ENCODE measurements at regions of chr15 and their contacts with region 1.

Region 1: GRCh38 chr15:89171136-89172072 is 50.0 kb downstream of the RLBP1 start:
- DNase-seq: peak; percentile 70
- H3K4me3 Mint-ChIP-seq: no peak overlapping the region
- H3K27ac Mint-ChIP-seq: no peak overlapping the region
- H3K4me1 Mint-ChIP-seq: peaks cover 19% of the 10 kb centered on the region
- H3K27me3 Mint-ChIP-seq: no peaks in the 10 kb centered on the region
- CTCF ChIP-seq: peak; percentile 65

Region 2: DNA sequence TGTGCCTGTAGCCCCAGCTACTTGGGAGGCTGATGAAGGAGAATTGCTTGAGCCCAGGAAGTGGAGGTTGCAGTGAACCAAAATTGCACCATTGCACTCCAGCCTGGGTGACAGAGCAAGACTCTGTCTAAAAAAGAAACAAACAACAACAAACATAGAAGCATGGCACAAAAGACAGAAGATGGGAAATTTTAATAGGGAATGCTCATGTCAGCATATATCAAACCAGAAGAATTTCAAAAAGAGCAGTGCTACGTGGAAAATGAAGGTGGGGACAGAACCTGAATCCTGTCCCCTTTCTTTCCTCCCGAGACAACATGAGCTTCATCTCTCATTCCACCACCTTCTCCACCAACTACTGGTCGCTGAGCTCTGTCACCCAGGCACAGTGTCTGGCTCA is 212.0 kb before region 1 on chr15:
- CTCF ChIA-PET with region 1: no interaction called
- POLR2A ChIA-PET with region 1: no interaction called
- intact Hi-C with region 1: no loop called
- DNase-seq: no peak
- H3K4me3 Mint-ChIP-seq: no peak overlapping the region
- H3K27ac Mint-ChIP-seq: no peak overlapping the region
- H3K4me1 Mint-ChIP-seq: no peaks in the 10 kb centered on the region
- H3K27me3 Mint-ChIP-seq: no peaks in the 10 kb centered on the region
- CTCF ChIP-seq: no peak

Region 3: GRCh38 chr15:89075846-89076245 is 95.6 kb before region 1 on chr15:
- CTCF ChIA-PET with region 1: interaction called, 10 read pairs
- POLR2A ChIA-PET with region 1: no interaction called
- intact Hi-C with region 1: no loop called
- DNase-seq: no peak
- H3K4me3 Mint-ChIP-seq: no peak overlapping the region
- H3K27ac Mint-ChIP-seq: no peak overlapping the region
- H3K4me1 Mint-ChIP-seq: peaks cover 8% of the 10 kb centered on the region
- H3K27me3 Mint-ChIP-seq: no peaks in the 10 kb centered on the region
- CTCF ChIP-seq: no peak

Region 4: DNA sequence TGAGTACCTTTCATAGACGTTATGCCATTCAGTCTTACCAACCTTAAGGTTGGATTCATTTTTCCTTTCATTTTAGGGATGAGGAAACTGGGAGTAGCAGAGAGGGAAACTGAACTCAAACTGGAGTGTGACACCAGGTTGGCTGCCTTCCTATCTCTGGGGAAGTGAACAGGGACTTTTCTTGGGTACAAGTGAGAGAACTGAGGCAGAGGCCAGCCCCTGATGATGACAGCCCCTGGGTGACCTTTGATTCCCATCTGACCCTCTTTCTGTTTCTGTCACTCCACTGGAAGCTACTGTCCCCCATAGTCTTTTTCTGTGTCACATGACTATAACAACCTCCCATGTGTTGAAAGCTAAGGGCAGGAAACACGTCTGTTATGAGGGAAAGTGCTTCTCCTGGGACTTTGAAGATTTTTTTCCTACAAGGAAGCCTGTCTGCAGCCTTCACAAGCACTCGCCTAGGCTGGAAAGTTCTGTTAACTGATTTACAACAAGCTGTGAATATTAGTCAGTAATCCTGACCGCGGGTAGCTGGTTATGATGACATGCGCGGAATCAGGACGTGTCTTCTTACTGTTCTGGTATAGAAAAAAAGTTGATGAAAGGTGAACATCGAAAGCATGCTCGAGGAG is 51.8 kb before region 1 on chr15:
- CTCF ChIA-PET with region 1: interaction called, 4 read pairs
- POLR2A ChIA-PET with region 1: interaction called, 12 read pairs
- intact Hi-C with region 1: no loop called
- DNase-seq: peak; percentile 66
- H3K4me3 Mint-ChIP-seq: no peak overlapping the region
- H3K27ac Mint-ChIP-seq: peak overlapping the region; percentile 91
- H3K4me1 Mint-ChIP-seq: peaks cover 47% of the 10 kb centered on the region
- H3K27me3 Mint-ChIP-seq: no peaks in the 10 kb centered on the region
- CTCF ChIP-seq: no peak

Region 5: DNA sequence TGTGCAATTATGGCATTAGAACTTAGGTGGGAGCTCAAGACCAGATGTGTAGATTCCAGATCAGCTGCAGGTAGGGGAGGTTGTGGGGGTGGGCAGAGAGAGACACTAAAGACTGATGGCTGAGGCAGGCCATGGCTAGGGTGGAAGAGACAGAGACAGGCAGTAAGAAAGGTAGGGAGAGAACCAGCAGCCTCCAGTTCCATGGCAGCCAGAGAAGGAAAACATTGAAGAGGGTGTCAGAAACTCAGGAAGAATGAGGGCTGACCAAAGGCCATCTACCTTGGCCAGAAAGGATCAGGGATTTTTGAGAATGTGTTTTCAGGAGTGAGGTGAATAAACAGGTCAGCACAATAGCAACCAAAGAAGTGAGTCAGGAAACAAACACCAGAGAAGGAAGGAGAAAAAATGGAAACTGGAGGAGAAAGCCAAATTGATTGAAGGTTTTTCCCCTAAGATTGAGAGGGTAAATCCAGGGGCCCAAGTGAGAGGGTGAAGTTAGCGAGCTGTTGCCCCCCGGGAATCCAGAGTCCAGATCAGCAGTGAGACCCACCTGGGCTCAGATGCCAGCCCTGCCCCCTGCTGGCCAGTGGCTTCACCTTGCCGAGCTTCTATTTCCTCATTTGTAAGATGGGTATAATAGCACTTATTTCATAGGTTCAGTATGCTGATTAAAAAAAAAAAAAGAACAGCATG is 42.1 kb before region 1 on chr15:
- CTCF ChIA-PET with region 1: interaction called, 38 read pairs
- POLR2A ChIA-PET with region 1: interaction called, 12 read pairs
- intact Hi-C with region 1: loop called (anchors 2 kb)
- DNase-seq: peak; percentile 60
- H3K4me3 Mint-ChIP-seq: no peak overlapping the region
- H3K27ac Mint-ChIP-seq: no peak overlapping the region
- H3K4me1 Mint-ChIP-seq: peaks cover 5% of the 10 kb centered on the region
- H3K27me3 Mint-ChIP-seq: no peaks in the 10 kb centered on the region
- CTCF ChIP-seq: peak; percentile 65

Region 6: DNA sequence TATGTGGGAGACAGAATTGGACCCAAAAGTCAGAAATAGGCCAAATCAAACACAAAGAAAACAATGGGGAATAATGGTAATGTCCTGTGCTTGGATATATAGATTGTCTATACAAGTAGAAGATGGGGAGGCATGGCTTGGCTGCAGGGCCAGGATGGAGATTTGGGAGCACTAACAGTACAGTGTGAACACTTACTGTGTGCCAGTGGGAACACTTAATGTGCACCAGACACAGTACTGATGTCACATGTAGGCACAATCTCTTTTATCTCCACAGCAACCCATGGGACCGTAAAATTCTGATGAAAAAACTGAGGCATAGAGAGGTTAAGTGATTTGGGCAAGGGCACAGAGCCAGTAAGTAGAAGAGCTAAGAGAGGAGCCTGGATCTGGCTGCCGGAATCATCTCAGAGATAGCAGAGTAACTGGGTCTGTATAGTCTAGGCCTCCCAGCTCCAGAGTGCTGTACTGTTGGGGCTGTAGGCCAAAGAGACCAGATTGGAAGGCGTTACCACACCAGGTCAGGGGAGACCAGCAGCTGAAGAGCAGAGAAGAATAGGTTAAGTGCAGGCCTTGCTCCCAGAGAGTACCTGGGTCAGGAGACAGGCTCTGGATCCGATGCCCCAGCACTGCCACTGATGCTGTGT is 13.4 kb before region 1 on chr15:
- CTCF ChIA-PET with region 1: interaction called, 18 read pairs
- POLR2A ChIA-PET with region 1: no interaction called
- intact Hi-C with region 1: no loop called
- DNase-seq: no peak
- H3K4me3 Mint-ChIP-seq: no peak overlapping the region
- H3K27ac Mint-ChIP-seq: no peak overlapping the region
- H3K4me1 Mint-ChIP-seq: no peaks in the 10 kb centered on the region
- H3K27me3 Mint-ChIP-seq: no peaks in the 10 kb centered on the region
- CTCF ChIP-seq: no peak

Region 7: DNA sequence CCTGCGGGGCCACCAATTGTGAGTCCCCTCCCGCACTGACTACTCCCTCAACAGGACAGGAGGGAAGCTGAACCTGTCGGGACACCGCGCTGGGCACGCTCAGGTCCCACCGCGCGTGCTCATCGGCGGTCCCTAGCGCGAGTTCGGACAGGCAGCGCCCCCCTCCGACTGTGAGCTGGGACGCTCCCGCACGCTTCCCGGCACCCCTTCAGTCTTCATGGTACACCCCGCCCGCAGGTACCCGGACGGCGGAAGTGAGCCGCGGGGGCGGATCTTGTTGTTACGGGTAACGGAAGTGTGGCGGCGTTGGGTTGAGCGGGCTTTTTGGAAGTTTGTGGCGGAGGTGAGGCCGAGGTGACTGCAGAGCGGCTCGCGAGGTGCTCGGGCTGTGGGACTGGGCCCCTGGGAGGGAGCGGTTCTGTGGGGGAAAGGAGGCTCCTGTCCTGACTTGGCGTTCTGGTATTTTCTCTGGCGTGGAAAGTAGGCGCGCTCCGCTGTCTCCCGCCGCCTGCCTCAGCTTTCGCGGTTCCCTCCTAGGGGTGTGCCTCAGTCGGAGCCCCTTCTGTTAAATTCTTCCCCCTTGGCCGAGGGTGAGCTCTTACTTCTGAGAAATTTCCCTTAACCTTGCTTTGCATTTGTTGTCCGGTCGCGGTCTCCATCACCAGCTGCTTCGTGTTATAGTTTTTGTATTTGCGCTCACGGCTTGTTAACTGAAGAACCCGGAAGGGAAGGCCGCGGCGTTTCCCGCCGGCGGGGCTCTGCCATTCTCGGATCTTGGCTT is 72.5 kb after region 1 on chr15 and contains the start of gene FANCI:
- CTCF ChIA-PET with region 1: no interaction called
- POLR2A ChIA-PET with region 1: no interaction called
- intact Hi-C with region 1: no loop called
- DNase-seq: peak; percentile 94
- H3K4me3 Mint-ChIP-seq: peak within 1 kb of the TSS; percentile 95
- H3K27ac Mint-ChIP-seq: peak within 1 kb of the TSS; percentile 93
- H3K4me1 Mint-ChIP-seq: peaks cover 31% of the 10 kb centered on the region
- H3K27me3 Mint-ChIP-seq: peaks cover 6% of the 10 kb centered on the region
- CTCF ChIP-seq: no peak
- total RNA-seq, gene FANCI: 24.0 and 34.0 TPM in 2 replicates

Region 8: GRCh38 chr15:89383365-89384175 is 212.2 kb after region 1 on chr15:
- CTCF ChIA-PET with region 1: no interaction called
- POLR2A ChIA-PET with region 1: no interaction called
- intact Hi-C with region 1: no loop called
- DNase-seq: peak; percentile 96
- H3K4me3 Mint-ChIP-seq: no peak overlapping the region
- H3K27ac Mint-ChIP-seq: no peak overlapping the region
- H3K4me1 Mint-ChIP-seq: no peaks in the 10 kb centered on the region
- H3K27me3 Mint-ChIP-seq: peaks cover 45% of the 10 kb centered on the region
- CTCF ChIP-seq: no peak

Measured in MCF 10A (cell line).